Vagina (tissue), 2 donors: ENCODE measurements at regions of chr12 and their contacts with region 1.

Region 1: DNA sequence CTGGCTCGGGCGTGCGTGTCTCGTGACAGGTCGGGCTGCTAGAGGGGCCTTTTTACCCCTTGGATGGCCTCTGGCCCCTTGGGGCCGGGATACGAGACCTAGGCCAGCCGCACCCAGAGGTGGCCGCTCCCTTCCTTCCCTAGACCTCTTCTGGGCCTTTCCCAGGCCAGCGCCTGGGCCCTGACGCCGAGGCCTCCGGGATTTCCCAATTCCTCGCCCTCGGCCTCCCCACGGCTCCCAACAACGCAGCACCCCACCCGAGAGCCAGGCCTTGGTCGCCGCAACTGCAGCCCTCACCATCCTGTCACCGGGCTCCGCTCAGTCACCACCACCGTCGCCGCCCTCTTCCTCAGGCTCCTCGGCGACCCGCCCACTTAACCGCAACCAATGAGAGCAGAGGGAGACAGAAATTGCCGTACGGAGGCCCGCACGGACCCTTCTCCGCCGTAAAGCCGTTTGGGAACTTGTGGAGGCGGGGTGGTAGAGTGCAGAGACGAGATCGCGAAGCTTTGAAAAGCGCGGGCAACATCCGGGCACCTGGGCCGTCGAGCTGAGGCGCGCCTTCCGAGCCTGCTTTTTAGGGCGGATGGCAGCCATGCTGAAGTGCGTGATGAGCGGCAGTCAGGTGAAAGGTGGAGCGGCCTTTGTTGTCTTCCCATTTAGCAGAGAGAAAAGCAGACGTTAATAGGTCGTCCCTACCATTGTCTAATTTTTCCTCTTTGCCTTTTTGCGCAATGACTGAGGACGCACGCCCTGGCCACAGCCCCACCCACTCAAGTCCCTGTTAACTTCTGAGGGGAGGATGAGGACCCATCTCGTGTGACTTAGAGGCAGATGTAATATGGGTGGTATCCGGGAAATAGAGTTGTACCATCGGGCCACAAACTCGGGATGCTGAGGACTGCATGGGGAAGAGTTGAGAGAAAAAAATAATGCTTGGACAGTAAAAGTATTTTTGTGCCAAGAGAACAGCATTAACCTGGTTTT is at the starts of genes RAD9B and VPS29:
- DNase-seq: peak; percentile 97
- H3K4me3 ChIP-seq: peak within 1 kb of the TSS; percentile 86 to 97
- H3K27ac ChIP-seq: peak within 1 kb of the TSS; percentile 85
- H3K4me1 ChIP-seq: peaks cover 38% of the 10 kb centered on the region
- H3K27me3 ChIP-seq: no peaks in the 10 kb centered on the region
- CTCF ChIP-seq: peak in 1 of 3 experiments; percentile 14
- POLR2A ChIP-seq: peak in 1 of 2 donors; percentile 68
- total RNA-seq, gene RAD9B: not detected
- total RNA-seq, gene VPS29: 74.9 TPM

Region 2: GRCh38 chr12:110449799-110450497 is 52.1 kb before region 1 on chr12 and contains the start of gene ARPC3:
- intact Hi-C with region 1: loop called (anchors 10 kb)
- DNase-seq: peak; percentile 95 to 97
- H3K4me3 ChIP-seq: peak within 1 kb of the TSS; percentile 86 to 93
- H3K27ac ChIP-seq: peak within 1 kb of the TSS; percentile 90
- H3K4me1 ChIP-seq: peaks cover 37% of the 10 kb centered on the region
- H3K27me3 ChIP-seq: no peaks in the 10 kb centered on the region
- CTCF ChIP-seq: peak; percentile 66 to 84 (median 75)
- POLR2A ChIP-seq: peak in 1 of 2 donors; percentile 29
- total RNA-seq, gene ARPC3: 180 TPM